Activated CD8-positive, alpha-beta T cell treated with anti-CD3 and anti-CD28 coated beads, Interleukin-2, amount 10 ng/mL, durations not matched to agents 7 days and 5 days (primary cell): ENCODE measurements at regions of chr17 and their contacts with region 1.

Region 1: DNA sequence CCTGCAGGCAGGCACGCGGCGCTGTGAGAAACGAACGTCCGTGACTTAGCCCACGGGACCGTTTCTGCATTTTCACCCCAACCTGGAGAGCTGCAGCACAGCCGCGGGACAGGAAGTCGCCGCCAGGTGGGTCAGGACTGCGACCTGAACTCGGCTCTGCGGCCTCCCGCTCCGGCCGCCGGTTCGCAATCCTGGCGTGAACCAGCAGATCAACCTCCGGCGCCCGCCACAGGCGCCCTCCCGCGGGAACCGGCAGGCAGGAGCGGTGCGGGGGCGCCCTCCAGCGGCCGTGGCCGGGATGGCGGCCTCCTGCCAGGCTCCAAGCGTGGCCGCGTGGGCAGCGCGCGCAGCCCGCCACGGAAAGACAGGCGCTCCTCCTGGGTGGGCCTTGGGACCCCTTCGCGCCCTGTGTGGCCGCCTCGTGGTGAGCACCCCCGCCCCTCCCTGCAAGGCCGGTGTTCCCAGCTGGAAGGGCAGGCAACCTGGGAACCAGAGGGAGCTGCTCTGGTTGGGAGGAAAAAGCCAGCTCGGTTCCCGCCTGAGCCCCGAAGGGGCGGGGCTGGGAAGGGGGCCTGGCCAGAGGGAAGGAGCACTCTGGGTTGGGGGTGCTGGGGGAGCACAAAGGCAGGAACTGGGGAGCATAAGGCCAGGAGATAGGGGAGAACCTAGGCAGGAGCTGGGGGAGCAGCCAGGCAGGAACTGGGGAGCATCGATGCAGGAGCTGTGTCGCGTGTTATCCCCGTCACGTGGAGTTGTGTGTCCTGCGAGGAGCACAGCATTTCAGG is 28.2 kb downstream of the ACTG1 start:
- DNase-seq: peak; percentile 90
- ATAC-seq: peak; percentile 76
- H3K4me3 Mint-ChIP-seq: no peak overlapping the region
- H3K27ac Mint-ChIP-seq: no peak overlapping the region
- H3K4me1 Mint-ChIP-seq: peaks cover 27% of the 10 kb centered on the region
- H3K27me3 Mint-ChIP-seq: peaks cover 32% of the 10 kb centered on the region

Region 2: DNA sequence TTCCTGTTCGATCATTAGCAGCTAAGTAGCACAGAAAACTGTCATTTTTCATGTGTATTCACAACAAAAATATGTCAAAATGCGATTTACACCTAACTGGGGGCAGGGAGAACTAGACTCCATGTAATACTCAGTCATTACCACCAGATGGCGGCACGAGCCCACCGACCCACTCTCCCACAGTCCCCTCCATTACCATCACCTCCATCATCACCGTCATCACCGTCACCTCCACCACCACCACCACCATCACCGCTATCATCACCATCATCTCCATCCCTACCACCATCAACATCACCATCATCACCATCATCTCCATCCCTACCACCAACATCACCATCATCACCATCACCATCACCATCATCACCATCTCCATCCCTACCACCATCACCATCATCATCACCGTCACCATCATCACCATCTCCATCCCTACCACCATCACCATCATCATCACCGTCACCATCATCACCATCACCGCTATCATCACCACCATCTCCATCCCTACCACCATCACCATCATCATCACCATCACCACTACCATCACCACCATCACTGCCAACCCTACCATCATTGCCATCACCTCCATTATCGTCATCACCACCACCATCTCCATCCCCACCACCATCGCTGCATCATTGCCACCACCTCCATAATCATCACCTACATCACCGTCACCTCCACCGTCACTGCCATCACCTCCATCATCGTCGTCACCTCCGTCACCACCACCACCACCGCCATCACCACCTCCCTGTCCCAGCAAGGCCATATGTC is 230.8 kb before region 1 on chr17:
- CTCF ChIA-PET with region 1: interaction called, 26 read pairs
- POLR2A ChIA-PET with region 1: no interaction called
- DNase-seq: peak; percentile 67
- ATAC-seq: peak; percentile 50
- H3K4me3 Mint-ChIP-seq: no peak overlapping the region
- H3K27ac Mint-ChIP-seq: peak overlapping the region; percentile 3
- H3K4me1 Mint-ChIP-seq: peaks cover 11% of the 10 kb centered on the region
- H3K27me3 Mint-ChIP-seq: no peaks in the 10 kb centered on the region

Region 3: GRCh38 chr17:81294856-81295680 is 189.3 kb before region 1 on chr17 and contains the start of gene SLC38A10:
- CTCF ChIA-PET with region 1: interaction called, 24 read pairs
- POLR2A ChIA-PET with region 1: interaction called, 3 read pairs
- DNase-seq: peak; percentile 94
- ATAC-seq: peak; percentile 95
- H3K4me3 Mint-ChIP-seq: peak within 1 kb of the TSS; percentile 94
- H3K27ac Mint-ChIP-seq: peak within 1 kb of the TSS; percentile 96
- H3K4me1 Mint-ChIP-seq: peaks cover 38% of the 10 kb centered on the region
- H3K27me3 Mint-ChIP-seq: peaks cover 3% of the 10 kb centered on the region
- total RNA-seq, gene SLC38A10: 78.5 to 83.5 TPM

Region 4: DNA sequence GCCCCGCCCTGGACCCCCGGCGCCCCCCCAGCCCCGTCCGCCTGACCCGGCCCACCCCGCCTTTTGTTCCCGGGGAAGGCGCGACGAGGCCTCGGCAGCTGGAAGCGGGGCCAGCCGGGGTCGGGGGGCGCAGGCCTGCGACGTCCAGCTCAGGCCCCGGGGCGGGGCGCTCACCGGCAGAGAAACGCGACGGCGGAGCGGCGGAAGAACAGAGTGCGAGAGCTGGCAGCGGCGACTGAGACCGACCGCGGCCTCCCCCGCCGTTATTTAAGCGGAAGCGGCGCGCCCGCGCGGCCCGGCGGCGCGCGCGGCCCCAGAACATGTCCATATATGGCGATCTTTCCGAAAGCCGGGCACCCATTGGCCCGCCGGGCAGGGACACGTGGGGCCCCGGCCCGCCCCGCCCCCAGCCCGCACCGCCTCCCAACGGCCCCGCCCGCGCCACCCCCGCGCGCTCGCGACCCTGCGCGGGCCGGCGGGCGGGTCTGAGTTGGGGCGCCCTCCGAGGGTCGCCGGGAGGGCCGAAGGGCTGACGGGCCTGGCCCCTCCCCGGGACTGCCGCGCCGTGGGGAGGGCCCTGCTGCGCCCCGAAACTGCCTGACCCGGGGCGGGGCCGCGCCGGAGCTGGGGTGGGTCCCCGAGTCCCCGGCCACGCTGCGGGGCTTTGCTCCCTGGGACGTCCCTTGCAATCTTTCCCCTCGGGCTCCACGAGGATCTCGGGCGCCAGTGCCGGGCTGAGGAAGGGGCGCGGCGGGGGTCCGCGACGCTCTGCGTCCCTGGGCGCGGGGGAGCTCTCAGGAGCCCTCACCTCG is 28.4 kb after region 1 on chr17 and contains the start of gene ACTG1:
- CTCF ChIA-PET with region 1: interaction called, 14 read pairs
- POLR2A ChIA-PET with region 1: interaction called, 18 read pairs
- DNase-seq: peak; percentile 93
- ATAC-seq: peak; percentile 59
- H3K4me3 Mint-ChIP-seq: peak within 1 kb of the TSS; percentile 95
- H3K27ac Mint-ChIP-seq: peak within 1 kb of the TSS; percentile 96
- H3K4me1 Mint-ChIP-seq: peaks cover 32% of the 10 kb centered on the region
- H3K27me3 Mint-ChIP-seq: no peaks in the 10 kb centered on the region
- total RNA-seq, gene ACTG1: 5,147 to 5,318 TPM

Region 5: GRCh38 chr17:81651692-81652091 is 167.3 kb after region 1 on chr17:
- CTCF ChIA-PET with region 1: no interaction called
- POLR2A ChIA-PET with region 1: no interaction called
- DNase-seq: no peak
- ATAC-seq: no peak
- H3K4me3 Mint-ChIP-seq: peak overlapping the region; percentile 23
- H3K27ac Mint-ChIP-seq: peak overlapping the region; percentile 67
- H3K4me1 Mint-ChIP-seq: peaks cover 41% of the 10 kb centered on the region
- H3K27me3 Mint-ChIP-seq: peaks cover 21% of the 10 kb centered on the region